Left ventricle myocardium superior (tissue), 1 donor: ENCODE measurements at regions of chr9 and their contacts with region 1.

Region 1: DNA sequence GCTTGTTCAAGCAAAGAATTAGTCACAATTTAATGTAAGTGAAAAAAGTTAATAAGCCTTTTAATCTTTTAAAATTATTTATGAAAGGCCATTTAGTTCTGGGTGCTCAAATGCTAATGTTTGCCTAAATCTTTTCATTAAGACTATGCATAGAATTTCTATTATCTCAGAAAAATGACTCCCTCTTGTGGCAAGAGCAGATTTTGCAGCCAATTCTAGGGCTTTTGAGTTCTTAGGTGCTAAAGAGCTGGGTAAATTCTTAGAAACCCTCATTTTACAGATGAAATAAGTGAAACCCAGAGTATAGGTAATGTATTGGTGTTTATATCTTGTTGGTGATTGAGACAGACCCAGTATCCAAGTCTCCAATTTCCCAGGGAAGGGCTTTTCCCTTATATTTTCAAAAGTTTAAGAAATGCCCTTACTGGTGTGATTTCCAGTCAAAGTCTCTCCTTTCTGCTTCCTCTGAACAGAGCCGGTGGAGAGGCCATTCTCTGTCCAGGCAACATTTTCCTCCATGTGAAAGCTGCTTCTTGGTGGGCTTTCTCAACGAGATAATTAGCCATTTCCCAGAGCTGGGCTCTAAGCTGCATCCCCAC is 24.1 kb upstream of the PCSK5 start:
- DNase-seq: no peak
- ATAC-seq: peak; percentile 50

Region 2: DNA sequence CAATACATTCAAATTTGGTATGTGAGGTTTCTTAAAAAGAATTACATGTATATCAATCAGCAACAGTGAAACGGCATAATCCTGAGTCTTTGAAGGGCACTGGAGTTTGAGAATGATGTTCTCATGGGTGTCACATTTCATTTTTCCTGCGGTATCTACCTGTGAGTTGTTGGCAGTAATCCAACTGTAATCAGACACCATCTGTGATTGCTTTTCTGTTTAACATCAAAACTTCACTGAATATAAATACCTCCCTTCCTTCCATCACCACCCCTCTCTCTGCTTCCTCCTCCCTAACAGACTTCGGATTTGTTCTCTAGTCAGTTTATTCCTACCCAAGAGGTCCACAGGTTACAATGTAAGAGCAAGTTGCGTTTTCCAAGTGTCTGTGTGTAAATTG is 251.1 kb before region 1 on chr9:
- intact Hi-C with region 1: loop called (anchors 10 kb)
- DNase-seq: no peak
- ATAC-seq: no peak